ENCODE measurements at regions of chr4 and their contacts with region 1.

Region 1: GRCh38 chr4:24419181-24420034 is 164.9 kb downstream of the DHX15 start:
- DNase-seq: peak; percentile 51
- ATAC-seq: no peak
- H3K4me3 ChIP-seq: no peak overlapping the region
- H3K4me3 Mint-ChIP-seq: no peak overlapping the region
- H3K27ac ChIP-seq: no peak overlapping the region
- H3K27ac Mint-ChIP-seq: no peak overlapping the region
- H3K4me1 ChIP-seq: peaks cover 0 to 3% of the 10 kb centered on the region in 2 donors
- H3K4me1 Mint-ChIP-seq: peaks cover 2% of the 10 kb centered on the region
- H3K27me3 ChIP-seq: peaks cover 0 to 3% (median 1%) of the 10 kb centered on the region in 4 experiments
- H3K27me3 Mint-ChIP-seq: peaks cover 11% of the 10 kb centered on the region
- CTCF ChIP-seq: peak; percentile 90

Region 2: GRCh38 chr4:22410645-22411247 is 2008.7 kb before region 1 on chr4:
- CTCF ChIA-PET with region 1: no interaction called
- POLR2A ChIA-PET with region 1: no interaction called
- intact Hi-C with region 1: loop called (anchors 10 kb)
- DNase-seq: no peak
- ATAC-seq: no peak
- H3K4me3 ChIP-seq: no peak overlapping the region
- H3K4me3 Mint-ChIP-seq: no peak overlapping the region
- H3K27ac ChIP-seq: no peak overlapping the region
- H3K27ac Mint-ChIP-seq: no peak overlapping the region
- H3K4me1 ChIP-seq: no peaks in the 10 kb centered on the region
- H3K4me1 Mint-ChIP-seq: no peaks in the 10 kb centered on the region
- H3K27me3 ChIP-seq: no peaks in the 10 kb centered on the region
- H3K27me3 Mint-ChIP-seq: no peaks in the 10 kb centered on the region
- CTCF ChIP-seq: peak; percentile 74

Region 3: GRCh38 chr4:22901631-22902030 is 1517.8 kb before region 1 on chr4:
- CTCF ChIA-PET with region 1: interaction called, 3 read pairs
- POLR2A ChIA-PET with region 1: no interaction called
- intact Hi-C with region 1: loop called (anchors 10 kb)
- DNase-seq: no peak
- ATAC-seq: no peak
- H3K4me3 ChIP-seq: no peak overlapping the region
- H3K4me3 Mint-ChIP-seq: no peak overlapping the region
- H3K27ac ChIP-seq: no peak overlapping the region
- H3K27ac Mint-ChIP-seq: no peak overlapping the region
- H3K4me1 ChIP-seq: no peaks in the 10 kb centered on the region
- H3K4me1 Mint-ChIP-seq: no peaks in the 10 kb centered on the region
- H3K27me3 ChIP-seq: no peaks in the 10 kb centered on the region
- H3K27me3 Mint-ChIP-seq: no peaks in the 10 kb centered on the region
- CTCF ChIP-seq: no peak